GM12878 (cell line): ENCODE measurements at regions of chr2 and their contacts with region 1.

Region 1: DNA sequence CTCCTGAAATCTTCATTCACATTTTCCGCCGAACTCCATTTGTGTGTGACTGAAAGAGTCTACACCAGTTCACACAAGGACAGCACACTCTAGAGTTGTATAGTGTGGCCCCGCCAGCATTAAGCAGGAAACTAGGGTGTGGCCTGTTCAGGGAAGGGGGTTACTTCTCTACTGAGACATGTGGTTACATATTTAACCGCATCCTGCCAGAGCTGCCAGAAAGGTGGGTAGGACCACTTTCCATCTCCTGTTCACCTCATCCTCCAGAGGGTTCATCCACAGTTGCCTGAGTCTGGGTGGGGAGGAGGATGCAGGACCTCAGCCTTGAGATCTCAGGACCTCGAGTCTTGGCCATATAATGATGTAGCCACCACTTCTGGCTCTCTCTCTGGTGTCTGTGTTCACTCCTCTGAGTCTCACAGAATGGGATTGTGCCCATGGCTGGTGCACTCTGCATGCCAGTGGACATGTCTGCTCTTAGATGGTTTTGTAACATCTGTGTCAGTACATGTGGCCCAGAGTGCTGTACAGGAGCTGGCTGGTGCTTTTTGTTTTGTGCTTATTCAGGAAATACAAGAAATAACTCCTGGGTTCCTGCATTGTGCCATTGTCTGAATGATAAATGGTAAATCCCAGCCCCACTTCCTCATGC is 7.7 kb upstream of the SP140L start:
- DNase-seq: peak; percentile 60
- ATAC-seq: peak; percentile 92
- H3K4me3 ChIP-seq: no peak overlapping the region
- H3K27ac ChIP-seq: peak overlapping the region; percentile 62
- H3K4me1 ChIP-seq: peaks cover 27% of the 10 kb centered on the region
- H3K27me3 ChIP-seq: no peaks in the 10 kb centered on the region
- CTCF ChIP-seq: no peak
- EP300 ChIP-seq: no peak
- POLR2A ChIP-seq: no peak
- RAD21 ChIP-seq: no peak

Region 2: DNA sequence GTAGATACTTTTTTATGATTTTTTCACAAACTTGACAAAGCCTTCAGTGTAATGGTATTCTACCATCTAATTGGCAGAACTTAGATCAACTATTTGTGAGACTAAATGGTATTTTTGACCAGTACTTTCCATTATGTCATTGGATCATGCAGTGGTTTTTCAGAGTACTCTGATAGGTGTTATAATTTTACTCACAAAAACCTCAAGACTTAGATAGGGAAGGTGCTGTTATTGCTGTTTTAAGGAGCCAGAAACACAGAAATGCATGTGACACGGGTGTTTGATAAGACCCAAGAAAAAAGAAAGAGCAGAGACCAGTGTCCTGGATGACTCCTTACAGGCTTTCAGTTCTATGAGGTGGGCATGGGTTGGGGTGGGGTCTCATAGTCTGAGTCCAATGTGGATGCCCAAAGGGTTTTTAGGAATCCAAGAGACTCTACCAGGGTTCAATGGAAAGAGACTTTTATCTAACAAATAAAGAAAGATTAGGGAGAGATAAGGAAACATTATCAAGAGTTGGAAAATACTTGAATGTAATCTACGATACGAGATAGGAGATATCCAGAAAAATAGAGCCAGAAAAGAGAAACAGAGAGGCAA is 62.5 kb before region 1 on chr2:
- CTCF ChIA-PET with region 1: no interaction called
- POLR2A ChIA-PET with region 1: no interaction called
- RAD21 ChIA-PET with region 1: no interaction called
- SMC1A ChIA-PET with region 1: interaction called, 7 read pairs
- in situ Hi-C with region 1: no loop called
- intact Hi-C with region 1: loop called (anchors 2 kb)
- DNase-seq: no peak
- ATAC-seq: peak; percentile 71
- H3K4me3 ChIP-seq: 0 out of 2 replicates have a peak overlapping the region, but pooled peaks have one; percentile 18
- H3K27ac ChIP-seq: peak overlapping the region; percentile 41; the same call in 1 of the 2 replicates
- H3K4me1 ChIP-seq: peaks cover 15% of the 10 kb centered on the region
- H3K27me3 ChIP-seq: no peaks in the 10 kb centered on the region
- CTCF ChIP-seq: no peak
- EP300 ChIP-seq: peak in 1 of 2 experiments; percentile 63; a peak in 1 of 4 replicates
- POLR2A ChIP-seq: no peak
- RAD21 ChIP-seq: no peak

Region 3: DNA sequence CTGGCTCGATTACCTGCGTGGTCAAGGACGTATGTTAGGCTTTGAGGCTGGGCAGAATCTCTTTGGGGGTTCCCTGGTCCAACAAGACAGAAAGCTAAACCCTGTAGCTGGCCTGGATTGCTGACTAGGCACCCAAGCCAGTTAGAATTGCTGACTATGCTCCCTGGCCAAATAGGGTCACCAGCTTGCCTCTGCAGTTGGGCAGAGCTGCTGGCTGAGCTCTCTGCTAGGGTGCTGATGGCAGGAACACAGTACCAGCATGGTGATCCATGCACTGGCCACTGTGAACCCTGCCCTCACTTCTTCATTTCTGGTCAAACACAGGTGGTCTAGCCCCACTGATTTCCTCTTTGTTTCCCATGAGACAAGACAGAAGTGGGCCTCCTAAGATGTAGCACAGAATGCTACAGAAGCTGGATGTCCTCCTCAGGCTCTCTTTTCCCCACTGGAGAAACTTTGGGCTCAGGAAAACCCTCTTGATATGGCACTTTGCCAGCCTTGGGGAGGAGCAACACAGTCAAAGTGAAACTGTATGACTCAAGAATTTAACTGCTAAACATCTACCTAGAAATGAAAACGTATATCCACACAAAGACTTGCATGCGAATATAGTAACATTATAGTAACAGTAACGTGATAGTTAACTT is 28.4 kb after region 1 on chr2:
- CTCF ChIA-PET with region 1: no interaction called
- POLR2A ChIA-PET with region 1: interaction called, 3 read pairs
- RAD21 ChIA-PET with region 1: no interaction called
- SMC1A ChIA-PET with region 1: interaction called, 11 read pairs
- in situ Hi-C with region 1: no loop called
- intact Hi-C with region 1: no loop called
- DNase-seq: peak; percentile 32
- ATAC-seq: peak; percentile 87
- H3K4me3 ChIP-seq: no peak overlapping the region
- H3K27ac ChIP-seq: peak overlapping the region; percentile 27; the same call in 1 of the 2 replicates
- H3K4me1 ChIP-seq: peaks cover 15% of the 10 kb centered on the region
- H3K27me3 ChIP-seq: no peaks in the 10 kb centered on the region
- CTCF ChIP-seq: no peak
- EP300 ChIP-seq: no peak
- POLR2A ChIP-seq: no peak
- RAD21 ChIP-seq: no peak